Activated B cell treated with CpG ODN at 0.5 μM for 24 hours (primary cell): ENCODE measurements at regions of chr3 and their contacts with region 1.

Region 1: GRCh38 chr3:72523429-72524151 is 324.7 kb downstream of the SHQ1 start:
- DNase-seq: peak; percentile 26
- ATAC-seq: peak; percentile 93
- H3K4me3 Mint-ChIP-seq: peak overlapping the region; percentile 64
- H3K27ac Mint-ChIP-seq: peak overlapping the region; percentile 80
- H3K4me1 Mint-ChIP-seq: peaks cover 42% of the 10 kb centered on the region
- H3K27me3 Mint-ChIP-seq: no peaks in the 10 kb centered on the region
- CTCF ChIP-seq: no peak

Region 2: GRCh38 chr3:72100080-72100511 is 423.5 kb before region 1 on chr3:
- CTCF ChIA-PET with region 1: no interaction called
- POLR2A ChIA-PET with region 1: no interaction called
- intact Hi-C with region 1: no loop called
- DNase-seq: peak; percentile 38
- ATAC-seq: peak; percentile 25
- H3K4me3 Mint-ChIP-seq: peak overlapping the region; percentile 83
- H3K27ac Mint-ChIP-seq: peak overlapping the region; percentile 84
- H3K4me1 Mint-ChIP-seq: peaks cover 78% of the 10 kb centered on the region
- H3K27me3 Mint-ChIP-seq: no peaks in the 10 kb centered on the region
- CTCF ChIP-seq: no peak

Region 3: GRCh38 chr3:72482589-72483321 is 40.8 kb before region 1 on chr3:
- CTCF ChIA-PET with region 1: no interaction called
- POLR2A ChIA-PET with region 1: interaction called, 3 read pairs
- intact Hi-C with region 1: loop called (anchors 5 kb)
- DNase-seq: no peak
- ATAC-seq: peak; percentile 80
- H3K4me3 Mint-ChIP-seq: peak overlapping the region; percentile 73
- H3K27ac Mint-ChIP-seq: peak overlapping the region; percentile 35
- H3K4me1 Mint-ChIP-seq: peaks cover 22% of the 10 kb centered on the region
- H3K27me3 Mint-ChIP-seq: peaks cover 11% of the 10 kb centered on the region
- CTCF ChIP-seq: no peak

Region 4: GRCh38 chr3:72496051-72496670 is 27.4 kb before region 1 on chr3:
- CTCF ChIA-PET with region 1: no interaction called
- POLR2A ChIA-PET with region 1: no interaction called
- intact Hi-C with region 1: loop called (anchors 1 kb)
- DNase-seq: no peak
- ATAC-seq: peak; percentile 77
- H3K4me3 Mint-ChIP-seq: peak overlapping the region; percentile 25
- H3K27ac Mint-ChIP-seq: peak overlapping the region; percentile 59
- H3K4me1 Mint-ChIP-seq: peaks cover 21% of the 10 kb centered on the region
- H3K27me3 Mint-ChIP-seq: peaks cover 7% of the 10 kb centered on the region
- CTCF ChIP-seq: no peak

Region 5: DNA sequence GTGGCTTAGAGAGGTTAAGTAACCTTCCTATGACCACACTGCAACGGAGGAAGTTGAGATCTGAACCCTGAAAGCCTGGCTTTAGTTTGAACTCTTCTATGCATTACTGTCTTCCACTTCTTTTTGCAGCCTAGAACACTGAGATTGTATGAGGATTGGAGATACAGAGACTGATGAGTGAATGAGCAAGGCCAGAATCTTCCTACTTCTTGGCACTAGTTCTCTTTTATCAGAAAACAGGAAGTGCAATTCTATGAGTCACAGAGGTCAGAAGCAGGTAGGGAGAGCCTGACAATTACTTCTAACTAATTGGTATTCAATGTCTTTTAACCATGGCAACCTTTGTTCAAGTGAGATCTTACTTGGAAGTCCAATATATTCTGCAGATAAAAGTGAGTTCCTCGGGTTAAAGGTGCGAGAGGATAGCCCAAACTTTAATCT is 105.6 kb after region 1 on chr3:
- CTCF ChIA-PET with region 1: no interaction called
- POLR2A ChIA-PET with region 1: no interaction called
- intact Hi-C with region 1: loop called (anchors 5 kb)
- DNase-seq: no peak
- ATAC-seq: peak; percentile 77
- H3K4me3 Mint-ChIP-seq: no peak overlapping the region
- H3K27ac Mint-ChIP-seq: no peak overlapping the region
- H3K4me1 Mint-ChIP-seq: peaks cover 21% of the 10 kb centered on the region
- H3K27me3 Mint-ChIP-seq: no peaks in the 10 kb centered on the region
- CTCF ChIP-seq: no peak